K562 (cell line): ENCODE measurements at regions of chr12 and their contacts with region 1.

Region 1: GRCh38 chr12:51923501-51924271 is 16.4 kb downstream of the ACVRL1 start:
- DNase-seq: peak; percentile 70 to 83 (median 76)
- ATAC-seq: peak; percentile 85
- H3K4me3 ChIP-seq: no peak overlapping the region
- H3K27ac ChIP-seq: no peak overlapping the region
- H3K4me1 ChIP-seq: peaks cover 34% of the 10 kb centered on the region in 2 experiments
- H3K27me3 ChIP-seq: no peaks in the 10 kb centered on the region
- CTCF ChIP-seq: peak; percentile 76 to 87 (median 86)
- EP300 ChIP-seq: no peak
- POLR2A ChIP-seq: no peak
- RAD21 ChIP-seq: peak; percentile 56 to 82

Region 2: DNA sequence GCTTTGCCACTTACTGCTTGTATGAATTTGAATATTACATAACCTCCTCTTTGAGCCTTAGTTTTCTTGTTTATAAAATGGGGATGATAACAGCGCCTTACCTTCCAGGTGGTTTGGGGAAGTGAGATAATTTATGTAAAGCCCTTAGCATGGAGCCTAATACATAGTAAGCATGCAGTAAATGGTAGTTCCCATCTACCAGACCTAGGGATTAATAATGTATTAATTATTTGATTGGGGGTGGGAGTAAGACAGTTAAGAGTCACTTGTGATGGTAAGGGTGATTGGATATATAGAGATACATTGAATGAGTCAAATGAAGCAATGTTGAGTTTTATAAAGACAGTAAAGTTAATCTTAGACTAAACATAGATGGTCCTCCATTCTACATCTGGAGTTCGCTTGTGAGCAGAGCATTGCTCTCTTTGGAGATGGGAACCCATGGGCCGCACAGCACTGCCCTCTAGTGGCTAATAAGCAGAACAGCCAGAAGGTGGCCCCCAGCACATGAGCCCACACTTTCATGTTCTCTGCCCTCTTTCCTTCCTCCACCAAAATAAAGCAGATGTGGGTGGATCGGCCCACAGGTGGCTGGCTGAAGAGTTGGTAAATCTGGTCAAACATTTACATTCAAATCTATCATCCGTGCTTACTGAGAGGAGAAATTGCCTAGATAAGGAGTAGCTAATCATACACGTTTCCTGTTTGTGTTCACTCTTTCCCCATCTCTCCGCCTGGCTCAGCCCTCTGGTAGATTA is 56.5 kb after region 1 on chr12:
- CTCF ChIA-PET with region 1: interaction called, 12 read pairs
- POLR2A ChIA-PET with region 1: no interaction called
- in situ Hi-C with region 1: no loop called
- intact Hi-C with region 1: loop called (anchors 1 kb)
- DNase-seq: peak; percentile 85 to 88 (median 86)
- ATAC-seq: peak; percentile 98
- H3K4me3 ChIP-seq: no peak overlapping the region
- H3K27ac ChIP-seq: no peak overlapping the region; the same call in 2 of the 3 replicates
- H3K4me1 ChIP-seq: peaks cover 0 to 15% of the 10 kb centered on the region in 2 experiments; a peak in 4 of 5 replicates
- H3K27me3 ChIP-seq: no peaks in the 10 kb centered on the region
- CTCF ChIP-seq: peak; percentile 94 to 97 (median 96)
- EP300 ChIP-seq: no peak
- POLR2A ChIP-seq: no peak
- RAD21 ChIP-seq: peak; percentile 91 to 97

Region 3: GRCh38 chr12:52014567-52015530 is 91.2 kb after region 1 on chr12:
- CTCF ChIA-PET with region 1: no interaction called
- POLR2A ChIA-PET with region 1: no interaction called
- in situ Hi-C with region 1: no loop called
- intact Hi-C with region 1: no loop called
- DNase-seq: no peak
- ATAC-seq: no peak
- H3K4me3 ChIP-seq: no peak overlapping the region
- H3K27ac ChIP-seq: no peak overlapping the region
- H3K4me1 ChIP-seq: peaks cover 12 to 13% of the 10 kb centered on the region in 2 experiments
- H3K27me3 ChIP-seq: no peaks in the 10 kb centered on the region; a peak in 1 of 5 replicates
- CTCF ChIP-seq: no peak
- EP300 ChIP-seq: no peak
- POLR2A ChIP-seq: no peak
- RAD21 ChIP-seq: no peak

Region 4: DNA sequence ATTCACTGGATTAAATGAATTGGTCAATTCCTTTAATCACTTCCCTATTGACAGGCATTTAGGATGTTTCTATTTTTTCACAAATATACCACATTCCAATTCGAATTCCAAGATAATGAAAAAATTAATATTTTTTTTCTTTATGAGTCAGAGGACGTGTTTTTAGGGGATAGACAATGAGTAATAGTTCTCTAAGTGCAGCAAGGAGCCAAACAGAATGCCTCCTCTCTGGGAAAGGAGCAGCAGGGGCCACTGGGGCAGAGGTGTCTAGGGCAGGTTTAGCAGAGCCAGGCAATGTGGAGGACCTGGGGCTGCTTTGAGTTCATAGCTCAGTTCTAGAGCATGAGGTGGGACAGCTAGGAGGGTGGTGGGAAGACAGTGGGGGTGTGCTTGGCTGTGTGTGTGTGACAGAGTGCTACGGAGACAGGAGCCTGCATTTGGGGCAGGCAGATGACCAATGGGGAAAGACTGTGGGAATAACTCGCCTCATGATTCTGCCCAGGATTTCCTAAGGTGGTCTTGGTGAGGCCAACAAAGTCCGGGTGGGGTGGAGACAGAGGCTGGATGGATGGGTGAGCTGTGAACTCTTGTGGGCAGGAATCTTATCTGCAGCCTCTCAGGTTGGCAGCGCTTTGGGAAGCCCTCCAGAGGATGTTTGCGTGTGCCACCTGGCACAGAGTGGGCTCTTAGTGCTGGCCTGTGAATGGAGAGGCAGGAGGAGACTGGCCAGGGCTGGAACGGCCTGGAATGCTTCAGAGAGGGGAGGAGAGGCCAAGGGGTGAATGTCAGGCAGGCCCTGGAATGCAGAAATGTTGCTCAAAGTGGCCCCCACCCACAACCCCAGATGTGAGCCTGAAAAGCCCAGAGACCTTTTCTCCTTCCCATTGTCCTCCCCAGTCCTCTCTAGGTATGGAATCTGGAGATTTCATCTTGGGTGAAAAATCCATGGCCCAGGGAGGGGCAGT is 306.9 kb after region 1 on chr12:
- CTCF ChIA-PET with region 1: no interaction called
- POLR2A ChIA-PET with region 1: no interaction called
- in situ Hi-C with region 1: no loop called
- intact Hi-C with region 1: no loop called
- DNase-seq: no peak
- ATAC-seq: no peak
- H3K4me3 ChIP-seq: no peak overlapping the region
- H3K27ac ChIP-seq: no peak overlapping the region
- H3K4me1 ChIP-seq: no peaks in the 10 kb centered on the region
- H3K27me3 ChIP-seq: peaks cover 2 to 45% of the 10 kb centered on the region in 2 experiments; a peak in 4 of 5 replicates
- CTCF ChIP-seq: no peak
- EP300 ChIP-seq: no peak
- POLR2A ChIP-seq: no peak
- RAD21 ChIP-seq: no peak